Natural killer cell (primary cell): ENCODE measurements at regions of chr14 and their contacts with region 1.

Region 1: DNA sequence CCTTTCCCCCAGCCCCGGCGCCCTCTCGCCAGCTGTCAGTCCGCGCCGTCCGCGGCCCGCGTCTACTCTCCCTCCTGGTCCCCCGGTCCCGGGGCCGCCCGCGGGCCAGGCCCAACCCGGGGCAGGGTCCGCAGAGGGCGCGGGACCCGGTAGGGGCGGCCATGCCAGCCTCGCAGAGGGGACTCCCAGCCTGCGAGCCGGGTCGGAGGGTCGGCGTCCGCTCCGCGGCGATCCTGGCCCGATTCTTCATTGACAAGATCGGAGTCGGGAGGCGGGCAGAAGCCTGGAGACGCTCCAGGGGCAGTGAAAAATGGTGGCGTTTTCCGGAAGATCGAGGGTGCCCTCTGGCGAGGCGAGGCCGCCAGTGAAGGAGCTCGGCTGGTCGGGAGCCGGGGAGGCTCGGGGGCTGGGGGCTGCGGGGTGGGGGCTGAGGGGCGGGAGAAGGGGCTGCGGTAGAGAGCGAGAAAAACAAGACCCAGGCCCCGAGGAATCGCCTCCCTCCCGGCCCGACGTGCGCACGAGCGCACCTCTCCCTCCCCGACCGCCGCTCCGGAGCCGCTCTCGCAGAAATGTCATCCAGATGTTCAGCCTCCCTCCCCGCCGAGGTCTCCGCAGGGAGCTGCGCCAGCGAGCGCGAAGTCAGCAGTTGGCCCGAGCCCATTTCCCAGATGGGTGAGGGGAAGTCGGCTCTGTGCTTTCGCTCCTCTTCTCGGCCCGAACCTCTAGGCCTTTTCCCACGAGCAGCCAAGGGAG is 647 bp upstream of the TGFB3 start:
- DNase-seq: peak; percentile 74 to 89
- ATAC-seq: peak; percentile 59 to 73 (median 72)
- H3K4me3 ChIP-seq: peak overlapping the region; percentile 57
- H3K4me3 Mint-ChIP-seq: peak overlapping the region; percentile 89
- H3K27ac ChIP-seq: peak overlapping the region; percentile 76
- H3K27ac Mint-ChIP-seq: peak overlapping the region; percentile 82 to 93
- H3K4me1 ChIP-seq: peaks cover 45% of the 10 kb centered on the region
- H3K4me1 Mint-ChIP-seq: peaks cover 51 to 54% of the 10 kb centered on the region in 2 donors
- H3K27me3 ChIP-seq: no peaks in the 10 kb centered on the region
- H3K27me3 Mint-ChIP-seq: no peaks in the 10 kb centered on the region
- CTCF ChIP-seq: peak; percentile 63

Region 2: DNA sequence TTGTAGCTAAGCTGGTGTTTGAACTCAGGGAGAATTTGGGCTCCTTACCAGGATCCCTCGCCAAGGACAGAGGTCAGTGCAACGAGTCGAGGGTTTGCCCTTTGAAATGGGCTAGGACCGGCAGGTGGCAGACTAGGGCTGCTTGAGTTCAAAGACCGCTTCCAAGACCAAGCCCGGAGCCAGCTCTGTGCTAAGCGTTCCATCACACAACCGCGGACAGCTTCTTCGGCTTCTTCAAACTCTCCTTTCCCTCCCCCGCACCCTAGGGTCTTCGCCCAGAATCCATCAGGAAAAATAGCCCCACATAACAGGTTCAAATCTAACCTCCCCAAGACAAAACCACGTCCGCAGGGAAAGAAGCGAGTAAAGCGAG is 404.7 kb before region 1 on chr14:
- intact Hi-C with region 1: loop called (anchors 2 kb)
- DNase-seq: peak; percentile 57 to 81
- ATAC-seq: peak; percentile 89 to 92 (median 92)
- H3K4me3 ChIP-seq: peak overlapping the region; percentile 38
- H3K4me3 Mint-ChIP-seq: peak overlapping the region; percentile 95
- H3K27ac ChIP-seq: no peak overlapping the region
- H3K27ac Mint-ChIP-seq: peak overlapping the region; percentile 39 to 60
- H3K4me1 ChIP-seq: peaks cover 16% of the 10 kb centered on the region
- H3K4me1 Mint-ChIP-seq: peaks cover 20 to 22% of the 10 kb centered on the region in 2 donors
- H3K27me3 ChIP-seq: no peaks in the 10 kb centered on the region
- H3K27me3 Mint-ChIP-seq: no peaks in the 10 kb centered on the region
- CTCF ChIP-seq: peak; percentile 70

Region 3: GRCh38 chr14:75660630-75661494 is 321.6 kb before region 1 on chr14 and contains the starts of genes ERG28 and TTLL5:
- intact Hi-C with region 1: loop called (anchors 2 kb)
- DNase-seq: peak; percentile 94 to 99
- ATAC-seq: peak; percentile 90 to 97 (median 93)
- H3K4me3 ChIP-seq: peak within 1 kb of the TSS; percentile 91
- H3K4me3 Mint-ChIP-seq: peak within 1 kb of the TSS; percentile 91
- H3K27ac ChIP-seq: peak within 1 kb of the TSS; percentile 90
- H3K27ac Mint-ChIP-seq: peak within 1 kb of the TSS; percentile 91 to 95
- H3K4me1 ChIP-seq: peaks cover 10% of the 10 kb centered on the region
- H3K4me1 Mint-ChIP-seq: peaks cover 20 to 24% of the 10 kb centered on the region in 2 donors
- H3K27me3 ChIP-seq: no peaks in the 10 kb centered on the region
- H3K27me3 Mint-ChIP-seq: no peaks in the 10 kb centered on the region
- CTCF ChIP-seq: no peak
- total RNA-seq, gene ERG28: 10.5 to 11.1 (median 10.9) TPM
- total RNA-seq, gene TTLL5: 27.1 to 34.3 (median 32.5) TPM

Region 4: GRCh38 chr14:75709207-75709812 is 273.1 kb before region 1 on chr14:
- intact Hi-C with region 1: loop called (anchors 1 kb)
- DNase-seq: peak; percentile 23 to 81
- ATAC-seq: peak; percentile 64 to 75 (median 73)
- H3K4me3 ChIP-seq: no peak overlapping the region
- H3K4me3 Mint-ChIP-seq: no peak overlapping the region
- H3K27ac ChIP-seq: no peak overlapping the region
- H3K27ac Mint-ChIP-seq: no peak overlapping the region
- H3K4me1 ChIP-seq: no peaks in the 10 kb centered on the region
- H3K4me1 Mint-ChIP-seq: no peaks in the 10 kb centered on the region
- H3K27me3 ChIP-seq: no peaks in the 10 kb centered on the region
- H3K27me3 Mint-ChIP-seq: no peaks in the 10 kb centered on the region
- CTCF ChIP-seq: peak; percentile 73

Region 5: DNA sequence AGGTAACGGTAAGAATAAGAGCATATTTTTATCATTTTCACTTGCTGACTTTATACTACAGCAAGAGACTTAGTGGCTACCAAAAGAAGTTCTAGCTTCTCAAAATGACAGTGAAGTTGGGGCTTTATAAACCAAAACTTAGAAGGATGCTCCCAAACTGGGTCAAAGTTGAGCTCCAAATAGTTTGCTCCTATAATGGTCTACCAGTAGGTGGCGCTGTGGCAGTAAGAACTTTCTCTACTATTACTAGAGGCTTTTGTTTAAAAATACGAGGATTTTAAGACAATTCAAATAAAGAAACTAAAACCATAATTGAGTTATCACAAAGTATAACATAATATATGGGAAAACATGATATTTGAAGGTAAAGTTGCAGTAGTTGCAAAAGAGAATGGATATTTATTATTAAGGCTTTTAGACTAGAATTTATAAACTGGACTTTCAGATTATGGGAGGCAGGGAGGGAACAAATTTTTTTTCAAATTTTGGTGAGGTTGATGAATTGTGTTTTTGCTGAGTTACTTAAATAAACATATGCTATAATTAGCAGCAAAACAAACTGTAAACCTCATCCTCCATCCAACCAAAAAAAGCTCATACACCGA is 75.7 kb before region 1 on chr14:
- intact Hi-C with region 1: loop called (anchors 1 kb)
- DNase-seq: peak; percentile 32 to 83
- ATAC-seq: peak in 2 of 3 donors; percentile 64 to 73
- H3K4me3 ChIP-seq: no peak overlapping the region
- H3K4me3 Mint-ChIP-seq: no peak overlapping the region
- H3K27ac ChIP-seq: no peak overlapping the region
- H3K27ac Mint-ChIP-seq: no peak overlapping the region
- H3K4me1 ChIP-seq: no peaks in the 10 kb centered on the region
- H3K4me1 Mint-ChIP-seq: no peaks in the 10 kb centered on the region
- H3K27me3 ChIP-seq: no peaks in the 10 kb centered on the region
- H3K27me3 Mint-ChIP-seq: no peaks in the 10 kb centered on the region
- CTCF ChIP-seq: peak; percentile 97